Ascending aorta (tissue), 2 donors: ENCODE measurements at regions of chr15 and their contacts with region 1.

Region 1: GRCh38 chr15:57692709-57693108 is 13.8 kb upstream of the POLR2M start:
- DNase-seq: no peak
- H3K4me3 ChIP-seq: no peak overlapping the region
- H3K27ac ChIP-seq: peak overlapping the region; percentile 77 to 85
- H3K4me1 ChIP-seq: peaks cover 8 to 41% of the 10 kb centered on the region in 2 donors
- H3K27me3 ChIP-seq: no peaks in the 10 kb centered on the region
- CTCF ChIP-seq: no peak

Region 2: DNA sequence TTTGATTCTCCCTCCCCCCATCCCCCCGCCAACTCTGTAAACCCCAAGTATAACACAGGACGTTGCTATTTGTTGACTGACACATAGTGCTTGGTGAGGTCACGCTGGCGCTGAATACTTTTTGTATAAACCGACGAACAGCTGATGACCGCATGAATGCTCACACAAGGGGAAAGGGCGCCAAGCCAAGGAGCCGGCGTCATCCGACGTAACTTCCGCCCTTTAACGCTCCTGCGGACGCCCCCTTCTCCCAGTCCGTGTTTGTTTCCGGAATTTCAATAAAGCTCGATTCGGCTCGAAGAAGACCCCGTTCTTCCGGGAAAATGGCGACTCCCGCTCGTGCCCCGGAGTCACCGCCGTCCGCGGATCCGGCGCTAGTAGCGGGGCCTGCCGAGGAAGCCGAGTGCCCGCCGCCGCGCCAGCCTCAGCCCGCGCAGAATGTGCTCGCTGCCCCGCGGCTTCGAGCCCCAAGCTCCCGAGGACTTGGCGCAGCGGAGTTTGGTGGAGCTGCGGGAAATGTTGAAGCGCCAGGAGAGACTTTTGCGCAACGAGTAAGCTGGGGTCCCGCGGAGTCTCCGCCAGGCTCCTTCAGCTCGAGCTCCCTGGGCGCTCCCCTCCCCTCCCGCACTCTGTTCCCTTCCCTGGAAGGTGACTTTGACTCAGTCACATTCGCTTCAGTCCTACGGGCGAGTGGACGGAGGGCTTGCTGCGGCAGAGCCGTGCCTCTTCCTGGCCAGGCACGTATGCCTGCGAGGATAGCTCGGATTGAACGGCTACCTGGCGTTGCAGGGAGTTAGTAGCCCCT is 13.9 kb after region 1 on chr15 and contains the start of gene POLR2M:
- intact Hi-C with region 1: loop called (anchors 1 kb)
- DNase-seq: peak; percentile 89 to 99
- H3K4me3 ChIP-seq: peak within 1 kb of the TSS; percentile 77 to 87
- H3K27ac ChIP-seq: peak within 1 kb of the TSS; percentile 96 to 97
- H3K4me1 ChIP-seq: peaks cover 0 to 26% of the 10 kb centered on the region in 2 donors
- H3K27me3 ChIP-seq: no peaks in the 10 kb centered on the region
- CTCF ChIP-seq: no peak
- total RNA-seq, gene POLR2M: 24.9 TPM

Region 3: DNA sequence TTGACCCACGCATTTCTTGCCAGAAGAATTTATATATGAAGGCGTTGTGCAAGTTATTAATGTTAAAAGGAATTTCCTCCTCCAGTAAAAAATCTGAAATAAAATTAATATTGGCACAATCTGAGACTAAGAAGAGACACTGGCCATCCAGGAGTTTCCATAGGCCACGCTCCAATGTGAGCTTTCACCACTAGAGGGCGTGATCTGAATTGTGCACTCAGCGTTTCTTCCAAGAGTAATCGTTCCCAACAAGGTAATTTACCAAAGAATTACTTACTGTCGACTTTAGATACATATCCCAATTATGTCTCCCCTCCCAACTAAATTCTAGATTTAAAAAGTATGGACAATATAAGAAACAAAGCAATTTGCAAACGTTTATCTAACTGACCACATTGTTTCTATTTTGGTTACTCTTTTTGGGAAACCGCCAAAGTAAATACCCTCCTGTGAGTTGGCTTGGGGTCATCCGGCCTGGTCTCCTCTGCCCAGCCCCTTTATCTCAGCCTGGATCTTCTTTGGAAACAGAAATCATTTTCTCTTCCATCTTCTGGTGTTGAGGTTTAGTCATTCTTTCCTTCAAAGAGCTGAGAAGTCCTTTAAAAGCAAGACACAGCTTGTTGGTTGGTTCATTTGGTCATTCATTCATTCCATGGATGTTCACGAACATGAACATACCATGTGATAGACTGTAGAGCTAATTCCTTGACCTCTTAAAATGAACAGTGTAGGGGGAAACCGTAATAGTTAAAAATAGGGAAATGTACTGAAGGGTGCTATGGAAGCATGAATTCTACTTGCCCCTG is 40.0 kb after region 1 on chr15:
- intact Hi-C with region 1: no loop called
- DNase-seq: peak in 1 of 2 donors; percentile 70
- H3K4me3 ChIP-seq: no peak overlapping the region
- H3K27ac ChIP-seq: no peak overlapping the region
- H3K4me1 ChIP-seq: no peaks in the 10 kb centered on the region
- H3K27me3 ChIP-seq: no peaks in the 10 kb centered on the region
- CTCF ChIP-seq: peak; percentile 36 to 72 (median 72)